Endothelial cell of umbilical vein (primary cell): ENCODE measurements at regions of chr1 and their contacts with region 1.

Region 1: DNA sequence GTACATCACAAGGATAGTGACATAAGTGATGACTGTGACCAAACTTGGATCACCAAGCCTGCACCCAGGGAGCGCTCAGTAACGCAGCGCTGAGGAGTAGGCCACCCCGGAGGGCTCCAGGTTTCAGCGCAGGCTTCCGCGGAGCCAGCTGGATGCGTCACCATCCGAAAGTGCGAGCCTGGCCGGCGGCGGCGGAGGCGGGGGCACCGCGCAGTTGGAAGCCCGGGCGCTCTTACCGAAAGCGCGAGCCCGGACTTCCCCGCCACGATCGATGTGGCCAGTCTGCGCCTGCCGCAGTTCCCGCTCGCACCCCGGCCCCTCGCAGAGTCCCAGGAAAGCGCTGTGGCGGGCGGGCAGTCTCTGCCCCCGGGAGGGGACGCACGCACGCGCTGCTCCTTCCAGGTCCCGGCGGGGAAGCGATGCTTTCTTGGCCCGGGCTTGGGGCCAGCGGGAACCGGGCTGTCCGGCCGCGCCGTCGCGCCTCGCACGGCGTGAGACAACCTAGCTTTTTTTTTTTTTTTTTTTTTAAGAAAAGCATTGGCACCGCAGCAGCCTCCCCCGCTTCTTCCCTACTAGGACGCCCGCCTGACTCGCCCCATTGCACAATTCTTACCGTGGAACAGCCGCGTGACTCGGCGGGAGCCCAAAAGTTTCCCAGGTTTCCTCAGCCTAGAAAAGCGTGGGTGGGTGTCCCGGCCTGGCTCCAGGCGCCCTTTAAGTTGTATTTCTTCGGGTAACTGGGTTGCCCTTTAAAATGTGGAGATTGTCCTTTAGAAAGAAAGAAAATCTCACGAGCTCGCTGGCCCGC is 36.4 kb upstream of the JAK1 start:
- DNase-seq: peak; percentile 82
- H3K4me3 ChIP-seq: peak overlapping the region; percentile 13 to 55 (median 46)
- H3K27ac ChIP-seq: peak overlapping the region; percentile 69
- H3K4me1 ChIP-seq: peaks cover 15% of the 10 kb centered on the region
- H3K27me3 ChIP-seq: no peaks in the 10 kb centered on the region
- CTCF ChIP-seq: no peak
- POLR2A ChIP-seq: peak; percentile 40

Region 2: DNA sequence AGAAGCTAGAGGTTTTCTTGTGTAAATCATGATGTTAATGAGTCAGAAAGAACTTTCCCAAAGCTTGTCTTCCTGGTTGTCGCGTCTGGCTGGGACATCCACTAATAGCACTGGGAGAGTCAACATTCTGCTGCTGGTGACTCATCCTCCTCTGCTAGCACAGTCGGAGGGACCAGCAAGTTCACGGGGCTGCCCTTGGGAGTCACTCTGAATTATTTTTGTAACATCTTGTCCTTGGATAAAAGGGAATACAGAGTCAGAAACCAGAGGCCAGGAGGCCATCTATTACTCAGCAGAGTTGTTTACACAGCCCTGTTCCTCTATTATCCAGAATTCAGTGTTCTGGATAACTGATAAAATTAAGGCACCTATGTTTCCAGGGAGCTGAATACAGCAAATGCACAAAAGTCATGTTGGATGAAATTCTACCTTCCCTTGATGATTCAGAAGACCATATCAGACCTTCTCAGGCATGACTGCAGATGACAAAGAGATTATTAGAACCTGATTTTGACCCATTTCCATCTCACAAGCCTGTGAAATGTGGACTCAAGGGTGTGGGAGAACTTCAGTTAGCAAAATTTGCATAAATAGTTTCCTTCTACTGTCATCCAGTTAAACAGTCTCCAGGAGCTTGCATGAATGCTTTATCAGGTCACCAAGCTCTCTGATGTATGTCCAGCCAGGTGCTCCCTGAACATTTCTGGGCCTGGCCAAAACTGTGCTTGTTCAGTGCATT is 104.4 kb before region 1 on chr1:
- CTCF ChIA-PET with region 1: no interaction called
- POLR2A ChIA-PET with region 1: no interaction called
- dilution Hi-C with region 1: no loop called
- intact Hi-C with region 1: loop called (anchors 1 kb)
- DNase-seq: peak; percentile 98
- H3K4me3 ChIP-seq: peak overlapping the region in 1 of 3 experiments; percentile 32
- H3K27ac ChIP-seq: peak overlapping the region; percentile 97
- H3K4me1 ChIP-seq: peaks cover 42% of the 10 kb centered on the region
- H3K27me3 ChIP-seq: no peaks in the 10 kb centered on the region
- CTCF ChIP-seq: no peak
- POLR2A ChIP-seq: peak; percentile 55

Region 3: DNA sequence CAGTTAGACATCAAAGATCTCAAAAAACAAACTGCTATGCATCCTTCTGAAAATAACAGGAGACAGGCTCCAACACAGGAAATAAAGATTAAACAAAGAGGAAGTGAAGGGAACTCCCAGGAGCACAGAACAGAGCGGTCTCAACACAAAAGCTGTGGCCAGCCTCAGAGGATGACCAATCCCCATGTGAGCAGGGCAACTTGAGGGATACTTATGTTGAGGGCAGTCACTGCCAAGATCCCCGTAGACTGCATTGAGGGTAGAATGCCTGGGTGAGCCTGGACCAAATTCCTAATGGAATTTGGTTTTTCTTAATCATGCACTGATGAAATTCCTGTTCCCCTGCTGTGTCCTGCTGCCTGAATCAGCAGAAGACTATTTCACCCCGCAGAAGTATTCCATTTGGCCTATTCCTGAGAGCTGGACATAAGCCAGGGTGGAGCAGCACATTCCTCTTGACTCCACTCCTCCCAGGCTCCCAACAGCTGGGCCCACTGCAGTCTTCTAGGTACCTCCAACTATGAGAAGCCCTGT is 85.3 kb before region 1 on chr1:
- CTCF ChIA-PET with region 1: no interaction called
- POLR2A ChIA-PET with region 1: interaction called, 3 read pairs
- dilution Hi-C with region 1: no loop called
- intact Hi-C with region 1: loop called (anchors 2 kb)
- DNase-seq: peak; percentile 91
- H3K4me3 ChIP-seq: peak overlapping the region in 1 of 3 experiments; percentile 6
- H3K27ac ChIP-seq: peak overlapping the region; percentile 86
- H3K4me1 ChIP-seq: peaks cover 54% of the 10 kb centered on the region
- H3K27me3 ChIP-seq: no peaks in the 10 kb centered on the region
- CTCF ChIP-seq: no peak
- POLR2A ChIP-seq: no peak

Region 4: GRCh38 chr1:65020774-65021173 is 18.1 kb after region 1 on chr1:
- CTCF ChIA-PET with region 1: interaction called, 12 read pairs
- POLR2A ChIA-PET with region 1: interaction called, 6 read pairs
- dilution Hi-C with region 1: no loop called
- intact Hi-C with region 1: no loop called
- DNase-seq: peak; percentile 14
- H3K4me3 ChIP-seq: no peak overlapping the region
- H3K27ac ChIP-seq: no peak overlapping the region
- H3K4me1 ChIP-seq: no peaks in the 10 kb centered on the region
- H3K27me3 ChIP-seq: no peaks in the 10 kb centered on the region
- CTCF ChIP-seq: peak; percentile 13 to 33
- POLR2A ChIP-seq: no peak

Region 5: DNA sequence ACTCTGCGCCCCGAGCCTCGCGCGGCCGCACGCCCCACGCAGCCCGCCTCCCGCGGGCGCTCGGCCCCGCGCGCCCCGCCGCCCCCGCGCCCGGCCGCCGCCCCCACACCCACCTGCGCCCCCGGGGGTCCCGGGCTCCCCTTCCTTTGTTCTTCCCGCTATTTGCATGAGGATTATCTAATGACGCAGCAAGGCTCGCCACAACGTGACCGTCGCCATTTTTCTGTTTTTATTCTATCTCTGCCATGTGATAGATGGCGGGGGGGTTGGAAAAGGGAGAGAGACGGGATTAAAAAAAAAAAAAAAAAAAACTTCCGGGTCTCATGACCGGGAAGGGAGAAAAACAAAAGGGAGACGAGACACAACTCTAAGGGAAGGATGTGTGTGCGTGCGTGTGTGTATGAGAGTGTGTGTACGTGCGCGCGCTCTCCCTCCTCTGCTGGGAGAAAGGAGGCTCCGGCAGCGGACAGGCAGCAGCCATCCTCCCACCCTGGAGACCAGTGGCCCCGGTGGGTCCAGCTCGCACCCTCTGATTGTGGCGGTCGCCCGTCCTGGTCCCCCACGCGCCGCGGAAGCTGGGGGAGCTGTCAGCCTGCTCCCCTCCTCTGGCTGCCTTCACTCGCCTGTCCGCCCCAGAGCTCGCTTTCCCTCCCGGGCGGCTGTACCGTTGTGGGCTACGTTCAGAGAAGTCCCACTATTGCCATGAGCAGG is 64.9 kb after region 1 on chr1:
- CTCF ChIA-PET with region 1: interaction called, 3 read pairs
- POLR2A ChIA-PET with region 1: no interaction called
- dilution Hi-C with region 1: no loop called
- intact Hi-C with region 1: loop called (anchors 5 kb)
- DNase-seq: peak; percentile 84
- H3K4me3 ChIP-seq: peak overlapping the region; percentile 48 to 88 (median 85)
- H3K27ac ChIP-seq: peak overlapping the region; percentile 82
- H3K4me1 ChIP-seq: peaks cover 14% of the 10 kb centered on the region
- H3K27me3 ChIP-seq: no peaks in the 10 kb centered on the region
- CTCF ChIP-seq: no peak
- POLR2A ChIP-seq: no peak

Region 6: GRCh38 chr1:65793359-65793732 is 790.6 kb after region 1 on chr1:
- CTCF ChIA-PET with region 1: no interaction called
- POLR2A ChIA-PET with region 1: no interaction called
- dilution Hi-C with region 1: no loop called
- intact Hi-C with region 1: no loop called
- DNase-seq: no peak
- H3K4me3 ChIP-seq: peak overlapping the region in 2 of 3 experiments; percentile 22 to 24
- H3K27ac ChIP-seq: no peak overlapping the region
- H3K4me1 ChIP-seq: peaks cover 13% of the 10 kb centered on the region
- H3K27me3 ChIP-seq: peaks cover 20 to 39% of the 10 kb centered on the region in 2 experiments
- CTCF ChIP-seq: no peak
- POLR2A ChIP-seq: no peak